PC-9 (cell line): ENCODE measurements at regions of chr6 and their contacts with region 1.

Region 1: DNA sequence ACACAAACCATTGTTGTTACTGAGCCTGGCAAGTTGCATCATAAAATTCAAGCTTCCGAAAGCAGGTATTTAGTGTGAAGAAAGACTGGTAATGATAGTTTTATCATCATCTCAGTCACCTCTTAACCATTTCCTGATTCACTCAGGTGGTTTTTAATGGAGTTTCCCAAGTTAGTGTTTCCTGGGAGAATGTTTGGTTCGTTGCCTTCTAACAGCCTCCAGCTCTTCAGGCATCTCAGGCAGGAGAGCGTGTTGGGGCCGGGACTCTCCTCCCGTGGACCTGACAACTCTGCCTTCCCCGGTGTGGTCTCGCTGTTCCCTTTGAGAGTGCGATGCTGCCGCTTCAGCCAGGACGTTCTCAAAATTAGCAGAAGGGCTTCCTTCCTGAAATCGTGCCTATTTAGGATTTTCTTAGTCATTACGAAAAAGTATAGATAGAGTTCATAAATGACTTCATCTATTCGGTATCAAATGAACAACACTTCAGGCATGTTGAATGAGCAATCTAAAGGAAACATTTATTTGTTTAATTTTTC is 105.0 kb upstream of the QKI start:
- DNase-seq: peak; percentile 16 to 93
- H3K4me3 ChIP-seq: peak overlapping the region; percentile 45; the same call in 1 of the 2 replicates
- H3K27ac ChIP-seq: peak overlapping the region; percentile 99
- H3K4me1 ChIP-seq: peaks cover 59% of the 10 kb centered on the region
- H3K27me3 ChIP-seq: no peaks in the 10 kb centered on the region
- CTCF ChIP-seq: no peak

Region 2: GRCh38 chr6:162882809-162883481 is 426.6 kb before region 1 on chr6:
- CTCF ChIA-PET with region 1: no interaction called
- POLR2A ChIA-PET with region 1: no interaction called
- intact Hi-C with region 1: no loop called
- DNase-seq: no peak
- H3K4me3 ChIP-seq: no peak overlapping the region
- H3K27ac ChIP-seq: no peak overlapping the region
- H3K4me1 ChIP-seq: no peaks in the 10 kb centered on the region
- H3K27me3 ChIP-seq: no peaks in the 10 kb centered on the region
- CTCF ChIP-seq: no peak

Region 3: DNA sequence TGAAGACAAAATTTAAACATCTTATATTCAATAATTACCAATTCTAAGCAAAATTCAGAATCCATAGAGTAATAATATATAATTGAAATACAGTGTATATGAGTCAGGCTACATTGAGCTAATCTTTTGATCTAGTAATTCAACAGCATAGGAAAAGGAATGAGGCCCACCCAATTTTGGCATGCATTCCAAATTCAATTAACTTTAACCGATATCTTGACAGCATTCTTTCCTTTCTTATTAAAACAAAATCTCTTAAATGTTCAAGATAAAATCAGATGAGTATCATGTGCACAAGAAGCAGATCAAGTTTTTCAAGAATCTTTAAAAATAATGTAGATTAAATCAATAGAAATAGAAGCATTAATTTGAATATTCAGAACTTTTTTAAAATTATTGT is 27.9 kb before region 1 on chr6:
- CTCF ChIA-PET with region 1: no interaction called
- POLR2A ChIA-PET with region 1: no interaction called
- intact Hi-C with region 1: loop called (anchors 1 kb)
- DNase-seq: peak; percentile 9 to 91
- H3K4me3 ChIP-seq: peak overlapping the region; percentile 4; the same call in 1 of the 2 replicates
- H3K27ac ChIP-seq: peak overlapping the region; percentile 68
- H3K4me1 ChIP-seq: peaks cover 26% of the 10 kb centered on the region
- H3K27me3 ChIP-seq: no peaks in the 10 kb centered on the region
- CTCF ChIP-seq: no peak

Region 4: DNA sequence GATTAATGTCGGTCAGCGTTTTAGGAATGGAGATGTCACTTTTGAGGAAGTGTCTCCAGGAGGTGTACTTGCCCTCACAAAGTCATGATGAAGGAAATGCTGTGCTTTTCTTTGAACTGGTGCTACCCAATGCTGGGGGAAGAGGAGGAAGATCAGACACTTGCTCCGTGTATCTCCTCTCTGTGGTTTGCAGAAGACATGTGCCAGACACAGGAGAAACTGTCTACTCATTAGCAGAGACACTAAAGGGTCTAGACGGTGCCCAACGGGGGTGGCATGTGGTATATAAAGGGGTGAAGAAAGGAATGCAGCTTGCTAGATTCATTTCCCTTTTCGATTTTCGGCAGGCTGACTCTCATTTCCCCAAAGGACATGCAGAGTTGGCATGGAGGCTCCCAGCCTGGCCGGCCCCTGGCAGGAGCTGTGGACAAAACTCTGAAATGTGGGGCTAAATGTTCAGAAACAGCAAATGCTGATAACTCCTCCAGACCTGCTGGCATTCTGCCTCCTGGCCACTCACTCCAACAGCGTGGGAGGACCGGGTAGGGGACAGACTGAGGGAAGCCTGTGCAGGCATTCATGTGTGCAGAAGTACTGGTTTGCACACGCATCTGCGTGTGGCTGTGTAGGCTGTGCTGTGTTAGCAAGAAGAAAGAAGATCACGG is 45.3 kb after region 1 on chr6:
- CTCF ChIA-PET with region 1: no interaction called
- POLR2A ChIA-PET with region 1: no interaction called
- intact Hi-C with region 1: loop called (anchors 5 kb)
- DNase-seq: no peak
- H3K4me3 ChIP-seq: no peak overlapping the region
- H3K27ac ChIP-seq: no peak overlapping the region
- H3K4me1 ChIP-seq: peaks cover 51% of the 10 kb centered on the region
- H3K27me3 ChIP-seq: no peaks in the 10 kb centered on the region
- CTCF ChIP-seq: no peak

Region 5: GRCh38 chr6:163392533-163392932 is 83.0 kb after region 1 on chr6:
- CTCF ChIA-PET with region 1: no interaction called
- POLR2A ChIA-PET with region 1: no interaction called
- intact Hi-C with region 1: loop called (anchors 5 kb)
- DNase-seq: peak; percentile 51 to 81
- H3K4me3 ChIP-seq: peak overlapping the region; percentile 55
- H3K27ac ChIP-seq: peak overlapping the region; percentile 98
- H3K4me1 ChIP-seq: peaks cover 42% of the 10 kb centered on the region
- H3K27me3 ChIP-seq: no peaks in the 10 kb centered on the region
- CTCF ChIP-seq: no peak

Region 6: GRCh38 chr6:163533443-163533842 is 223.9 kb after region 1 on chr6:
- CTCF ChIA-PET with region 1: no interaction called
- POLR2A ChIA-PET with region 1: no interaction called
- intact Hi-C with region 1: no loop called
- DNase-seq: peak in 1 of 2 experiments; percentile 46
- H3K4me3 ChIP-seq: no peak overlapping the region
- H3K27ac ChIP-seq: 0 out of 2 replicates have a peak overlapping the region, but pooled peaks have one; percentile 12
- H3K4me1 ChIP-seq: peaks cover 15% of the 10 kb centered on the region
- H3K27me3 ChIP-seq: no peaks in the 10 kb centered on the region
- CTCF ChIP-seq: no peak

Region 7: GRCh38 chr6:163579880-163580295 is 270.3 kb after region 1 on chr6:
- CTCF ChIA-PET with region 1: no interaction called
- POLR2A ChIA-PET with region 1: no interaction called
- intact Hi-C with region 1: no loop called
- DNase-seq: peak in 1 of 2 experiments; percentile 62
- H3K4me3 ChIP-seq: no peak overlapping the region
- H3K27ac ChIP-seq: no peak overlapping the region
- H3K4me1 ChIP-seq: no peaks in the 10 kb centered on the region
- H3K27me3 ChIP-seq: no peaks in the 10 kb centered on the region
- CTCF ChIP-seq: no peak